ENCODE measurements at regions of chr3 and their contacts with region 1.

Region 1: DNA sequence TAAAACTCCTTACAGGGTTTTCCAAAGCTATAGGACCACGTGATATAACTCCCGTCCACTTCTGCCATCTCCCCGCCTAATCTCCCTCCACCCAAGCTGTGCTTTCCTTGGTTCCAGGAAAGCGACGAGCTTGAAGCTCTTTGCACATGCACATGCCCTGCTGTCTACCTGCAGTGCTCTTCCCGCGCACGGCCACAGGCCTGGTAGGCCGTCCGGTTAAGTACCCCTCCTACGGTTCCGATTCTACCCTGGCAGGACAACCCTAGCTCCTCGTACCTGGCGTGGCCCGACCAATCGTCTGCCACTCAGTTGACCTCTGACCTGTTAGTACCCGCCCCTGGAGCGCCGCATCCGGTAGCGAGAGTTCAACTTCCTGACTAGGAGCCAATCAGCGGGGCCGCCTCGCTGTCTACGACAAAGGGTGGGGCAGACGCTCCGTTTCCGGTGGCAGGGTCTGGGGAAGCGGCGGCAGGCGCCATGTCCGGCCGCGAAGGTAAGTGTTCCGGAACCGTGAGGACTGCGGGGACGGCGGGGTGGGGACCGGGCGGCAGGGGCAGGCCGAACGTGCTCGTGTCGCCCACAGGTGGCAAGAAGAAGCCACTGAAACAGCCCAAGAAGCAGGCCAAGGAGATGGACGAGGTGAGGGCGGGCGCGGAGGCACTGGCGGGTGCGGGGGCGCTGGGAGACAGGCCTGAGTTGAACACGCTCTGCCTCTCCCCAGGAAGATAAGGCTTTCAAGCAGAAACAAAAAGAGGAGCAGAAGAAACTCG is at the starts of genes CCDC51 and TMA7:
- DNase-seq: peak; percentile 98 to 99 (median 99)
- H3K4me3 ChIP-seq: peak within 1 kb of the TSS; percentile 94 to 100 (median 97)
- H3K27ac ChIP-seq: peak within 1 kb of the TSS; percentile 90 to 97
- H3K4me1 ChIP-seq: peaks cover 0 to 15% (median 8%) of the 10 kb centered on the region in 3 donors
- H3K27me3 ChIP-seq: no peaks in the 10 kb centered on the region
- CTCF ChIP-seq: peak; percentile 3
- total RNA-seq, gene CCDC51: 13.8 TPM
- total RNA-seq, gene TMA7: 195 TPM

Region 2: DNA sequence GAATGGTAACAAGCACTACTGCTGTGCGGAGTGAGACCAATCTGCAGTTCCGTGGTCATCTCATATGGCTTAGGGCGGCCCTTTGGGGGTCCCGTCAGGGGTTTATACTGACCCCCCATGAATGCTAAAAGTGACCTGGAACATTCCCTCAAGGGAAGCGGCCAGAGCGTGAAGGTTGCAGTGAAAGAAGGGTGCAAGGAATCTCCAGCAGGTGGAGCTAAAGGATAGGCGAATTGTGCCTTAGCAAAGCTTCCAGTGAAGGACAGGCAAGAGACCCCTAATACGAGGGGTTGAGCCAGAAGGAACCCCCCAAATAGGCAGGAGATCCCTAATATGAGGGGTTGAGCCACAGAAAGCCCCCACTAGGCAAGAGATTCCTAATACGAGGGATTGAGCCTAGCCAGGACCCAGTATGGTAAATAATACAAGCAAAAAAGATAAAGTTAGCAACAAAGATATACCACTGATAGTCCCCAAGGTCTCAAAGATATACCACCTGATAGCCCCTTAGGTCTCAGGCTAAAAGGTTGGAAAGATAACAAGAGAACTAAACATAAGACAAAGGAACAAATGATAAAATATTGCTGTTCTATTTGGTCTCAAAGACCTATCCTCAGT is 166.3 kb before region 1 on chr3:
- intact Hi-C with region 1: loop called (anchors 10 kb)
- DNase-seq: peak in 4 of 5 donors; percentile 62 to 84 (median 76)
- H3K4me3 ChIP-seq: no peak overlapping the region
- H3K27ac ChIP-seq: no peak overlapping the region
- H3K4me1 ChIP-seq: peaks cover 0 to 6% (median 2%) of the 10 kb centered on the region in 3 donors
- H3K27me3 ChIP-seq: no peaks in the 10 kb centered on the region
- CTCF ChIP-seq: peak; percentile 86

Region 3: DNA sequence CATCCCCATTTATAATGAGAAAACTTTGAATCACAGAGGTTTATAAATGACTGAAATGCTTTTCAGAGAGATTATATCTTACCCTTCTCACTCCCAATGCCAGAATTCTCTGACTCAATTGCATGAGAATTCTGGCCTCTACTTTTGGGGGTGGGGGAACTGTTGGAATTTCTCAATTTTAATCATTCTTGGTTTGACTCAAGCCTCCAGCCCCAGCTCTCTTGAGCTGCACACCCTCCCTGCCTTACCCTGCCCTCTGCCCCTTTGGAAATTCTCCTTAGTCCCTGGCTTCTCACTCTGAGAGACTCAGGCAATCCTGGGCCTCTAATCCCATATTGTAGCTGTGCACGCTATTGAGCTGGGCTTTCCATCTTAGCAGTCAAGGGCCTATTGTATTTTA is 154.9 kb before region 1 on chr3:
- intact Hi-C with region 1: no loop called
- DNase-seq: no peak
- H3K4me3 ChIP-seq: no peak overlapping the region
- H3K27ac ChIP-seq: no peak overlapping the region
- H3K4me1 ChIP-seq: no peaks in the 10 kb centered on the region
- H3K27me3 ChIP-seq: no peaks in the 10 kb centered on the region
- CTCF ChIP-seq: no peak

Region 4: DNA sequence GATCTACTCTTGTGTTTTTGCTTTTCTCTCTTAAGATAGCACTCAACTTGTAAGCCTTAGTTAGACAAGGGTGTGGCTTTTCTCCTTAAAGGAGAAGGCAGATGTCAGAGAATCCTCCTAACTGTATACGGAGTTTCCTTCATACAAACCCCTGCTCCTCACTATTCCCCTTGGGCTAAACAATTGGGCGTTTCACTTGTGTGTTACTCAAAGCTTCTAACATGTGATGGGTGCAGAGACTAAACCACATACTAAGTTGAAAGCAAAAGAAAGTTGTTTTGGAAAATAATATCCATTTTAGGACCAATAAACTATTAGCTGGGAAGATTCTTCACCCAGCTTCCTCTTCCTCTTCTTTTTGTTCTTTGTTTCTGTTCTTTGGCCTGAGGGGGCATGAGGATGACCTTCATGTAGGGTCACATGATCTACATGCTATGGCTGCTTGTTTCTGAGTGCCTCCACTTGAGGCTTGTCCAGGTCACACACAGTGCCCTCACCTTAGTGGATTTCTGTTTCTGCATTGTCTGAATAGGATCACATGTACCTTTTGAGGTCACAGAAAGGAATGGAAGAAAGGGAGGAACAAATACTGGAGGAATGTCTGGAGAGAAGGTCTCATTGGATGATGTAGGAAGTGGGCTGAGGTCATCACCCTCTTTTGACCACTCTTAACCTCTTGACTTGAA is 121.1 kb before region 1 on chr3:
- intact Hi-C with region 1: no loop called
- DNase-seq: no peak
- H3K4me3 ChIP-seq: no peak overlapping the region
- H3K27ac ChIP-seq: no peak overlapping the region
- H3K4me1 ChIP-seq: no peaks in the 10 kb centered on the region
- H3K27me3 ChIP-seq: no peaks in the 10 kb centered on the region
- CTCF ChIP-seq: no peak

Region 5: GRCh38 chr3:48400824-48401433 is 39.1 kb before region 1 on chr3:
- intact Hi-C with region 1: loop called (anchors 5 kb)
- DNase-seq: peak; percentile 27 to 91 (median 64)
- H3K4me3 ChIP-seq: no peak overlapping the region
- H3K27ac ChIP-seq: no peak overlapping the region
- H3K4me1 ChIP-seq: peaks cover 0 to 5% (median 3%) of the 10 kb centered on the region in 3 donors
- H3K27me3 ChIP-seq: no peaks in the 10 kb centered on the region
- CTCF ChIP-seq: peak; percentile 87